Activated naive CD4-positive, alpha-beta T cell treated with anti-CD3 and anti-CD28 coated beads for 36 hours (primary cell): ENCODE measurements at regions of chr9 and their contacts with region 1.

Region 1: GRCh38 chr9:20941174-20941690 is 90.2 kb downstream of the HACD4 start:
- DNase-seq: peak; percentile 63
- H3K4me3 Mint-ChIP-seq: no peak overlapping the region
- H3K27ac Mint-ChIP-seq: no peak overlapping the region
- H3K4me1 Mint-ChIP-seq: peaks cover 3% of the 10 kb centered on the region
- H3K27me3 Mint-ChIP-seq: no peaks in the 10 kb centered on the region

Region 2: DNA sequence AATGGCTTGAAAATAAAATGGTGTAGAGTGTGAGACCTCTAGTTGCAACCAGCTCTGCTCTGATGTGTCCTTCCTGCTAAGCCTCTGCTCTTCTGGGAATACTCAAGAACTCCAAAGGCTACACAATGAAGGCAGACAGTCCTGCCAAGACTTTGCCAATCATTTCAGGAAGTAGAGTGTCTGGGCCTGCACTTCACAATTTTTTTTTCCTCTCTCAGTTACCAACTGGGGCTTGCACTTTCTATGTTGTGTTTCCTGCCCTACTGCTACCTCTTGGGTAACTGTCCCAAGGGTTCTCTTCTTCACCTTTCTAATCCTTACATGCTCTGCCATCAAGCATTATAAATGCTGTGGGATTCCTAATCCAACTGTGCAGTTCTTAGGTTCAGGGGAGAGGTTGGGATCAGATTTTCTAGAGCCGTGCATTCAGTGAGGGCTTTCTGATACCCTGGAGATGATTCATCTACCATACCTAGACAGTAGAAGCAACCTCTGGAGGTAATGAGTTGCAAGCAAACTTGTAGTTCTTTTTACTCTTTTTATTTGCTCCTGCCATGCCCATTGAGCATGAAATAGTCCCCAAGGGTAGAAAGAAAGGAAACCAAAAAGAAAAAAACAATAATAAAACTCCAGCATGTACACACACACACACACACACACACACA is 684.8 kb before region 1 on chr9:
- CTCF ChIA-PET with region 1: interaction called, 3 read pairs
- intact Hi-C with region 1: loop called (anchors 5 kb)
- DNase-seq: no peak
- H3K4me3 Mint-ChIP-seq: no peak overlapping the region
- H3K27ac Mint-ChIP-seq: no peak overlapping the region
- H3K4me1 Mint-ChIP-seq: peaks cover 38% of the 10 kb centered on the region
- H3K27me3 Mint-ChIP-seq: no peaks in the 10 kb centered on the region

Region 3: DNA sequence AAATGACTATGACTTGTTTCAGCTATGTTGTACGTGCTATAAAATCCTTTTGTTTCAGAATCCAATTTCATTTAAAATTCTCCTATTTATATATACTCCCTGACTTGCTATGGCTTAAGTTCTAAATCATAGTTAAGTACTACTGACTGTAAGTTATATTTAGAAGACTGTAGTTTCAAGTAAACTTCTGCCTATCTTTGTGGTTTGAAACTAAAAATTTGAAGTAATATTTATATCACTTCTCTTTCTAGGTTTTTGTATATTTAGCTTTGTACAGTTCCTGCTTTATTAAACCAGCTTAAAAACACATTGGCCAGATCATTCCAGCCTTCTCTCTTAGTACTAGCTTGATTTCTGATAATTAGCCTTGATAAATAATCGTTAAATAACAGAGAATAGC is 515.2 kb before region 1 on chr9:
- CTCF ChIA-PET with region 1: no interaction called
- intact Hi-C with region 1: loop called (anchors 2 kb)
- DNase-seq: no peak
- H3K4me3 Mint-ChIP-seq: no peak overlapping the region
- H3K27ac Mint-ChIP-seq: no peak overlapping the region
- H3K4me1 Mint-ChIP-seq: peaks cover 28% of the 10 kb centered on the region
- H3K27me3 Mint-ChIP-seq: no peaks in the 10 kb centered on the region

Region 4: GRCh38 chr9:20526500-20527319 is 414.5 kb before region 1 on chr9:
- CTCF ChIA-PET with region 1: no interaction called
- intact Hi-C with region 1: loop called (anchors 2 kb)
- DNase-seq: no peak
- H3K4me3 Mint-ChIP-seq: no peak overlapping the region
- H3K27ac Mint-ChIP-seq: no peak overlapping the region
- H3K4me1 Mint-ChIP-seq: peaks cover 80% of the 10 kb centered on the region
- H3K27me3 Mint-ChIP-seq: no peaks in the 10 kb centered on the region

Region 5: GRCh38 chr9:20884985-20885593 is 56.1 kb before region 1 on chr9:
- CTCF ChIA-PET with region 1: interaction called, 24 read pairs
- intact Hi-C with region 1: loop called (anchors 1 kb)
- DNase-seq: peak; percentile 78
- H3K4me3 Mint-ChIP-seq: no peak overlapping the region
- H3K27ac Mint-ChIP-seq: no peak overlapping the region
- H3K4me1 Mint-ChIP-seq: no peaks in the 10 kb centered on the region
- H3K27me3 Mint-ChIP-seq: no peaks in the 10 kb centered on the region

Region 6: DNA sequence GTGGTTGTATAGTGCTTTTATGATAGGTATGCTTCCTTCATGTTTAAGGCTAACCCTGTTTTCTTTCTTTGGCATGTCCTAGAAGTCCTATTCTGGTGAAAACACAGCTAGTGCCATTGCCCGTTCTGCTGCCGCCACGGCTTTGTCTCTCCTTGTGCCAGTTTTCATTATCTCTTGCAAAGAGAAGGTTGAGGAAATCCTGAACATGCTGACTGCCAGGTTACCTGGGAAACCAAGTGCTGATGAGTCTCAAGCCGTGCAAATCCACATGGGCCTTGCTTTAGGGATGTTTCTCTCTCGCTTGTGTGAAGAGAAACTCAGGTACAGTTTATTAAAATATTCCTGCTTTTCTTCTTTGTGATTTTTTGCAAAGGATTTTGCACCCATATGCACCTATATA is 12.0 kb before region 1 on chr9:
- CTCF ChIA-PET with region 1: interaction called, 10 read pairs
- intact Hi-C with region 1: no loop called
- DNase-seq: no peak
- H3K4me3 Mint-ChIP-seq: no peak overlapping the region
- H3K27ac Mint-ChIP-seq: no peak overlapping the region
- H3K4me1 Mint-ChIP-seq: peaks cover 15% of the 10 kb centered on the region
- H3K27me3 Mint-ChIP-seq: no peaks in the 10 kb centered on the region

Region 7: DNA sequence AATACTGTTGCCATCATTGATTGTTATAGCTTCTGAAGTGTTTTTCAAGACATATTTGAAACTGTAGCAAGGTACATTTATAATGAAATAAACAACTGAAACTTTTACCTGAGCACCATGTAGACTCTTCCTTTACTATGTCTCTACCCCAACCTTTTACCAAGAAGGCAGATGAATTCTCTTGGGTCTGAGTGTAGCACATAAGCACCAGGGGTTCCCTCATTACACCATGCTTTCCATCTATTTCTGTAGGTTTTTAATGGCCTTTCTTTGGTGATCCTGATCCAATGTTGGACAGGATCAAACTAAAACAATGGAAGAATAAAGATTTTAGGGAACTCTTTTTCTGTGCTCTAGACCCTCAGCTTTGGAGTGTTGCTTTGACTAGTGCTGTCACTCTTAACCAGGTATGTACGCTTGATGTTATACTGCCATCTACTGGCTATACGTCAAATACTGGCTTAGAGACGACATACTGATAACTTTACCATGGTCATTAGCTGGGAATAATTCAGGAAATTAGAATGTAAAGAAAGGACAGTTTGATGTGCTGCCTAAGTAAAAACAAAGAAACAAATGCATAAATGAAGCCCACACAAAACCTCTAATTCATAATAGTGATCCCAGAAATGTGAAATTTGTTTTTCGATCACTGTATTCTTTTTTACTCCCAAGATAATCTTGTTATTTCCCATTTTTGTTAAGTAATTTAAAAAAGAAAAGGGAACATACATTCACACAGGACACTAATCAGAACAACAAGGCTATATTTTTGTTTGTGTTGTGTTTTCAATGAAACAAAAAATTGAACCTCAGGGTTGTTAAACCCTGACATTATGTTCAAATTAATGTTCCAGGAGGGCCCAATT is 169.7 kb after region 1 on chr9:
- CTCF ChIA-PET with region 1: interaction called, 40 read pairs
- intact Hi-C with region 1: loop called (anchors 1 kb)
- DNase-seq: peak; percentile 20
- H3K4me3 Mint-ChIP-seq: no peak overlapping the region
- H3K27ac Mint-ChIP-seq: no peak overlapping the region
- H3K4me1 Mint-ChIP-seq: no peaks in the 10 kb centered on the region
- H3K27me3 Mint-ChIP-seq: no peaks in the 10 kb centered on the region